HCT116 (cell line): ENCODE measurements at regions of chr18 and their contacts with region 1.

Region 1: DNA sequence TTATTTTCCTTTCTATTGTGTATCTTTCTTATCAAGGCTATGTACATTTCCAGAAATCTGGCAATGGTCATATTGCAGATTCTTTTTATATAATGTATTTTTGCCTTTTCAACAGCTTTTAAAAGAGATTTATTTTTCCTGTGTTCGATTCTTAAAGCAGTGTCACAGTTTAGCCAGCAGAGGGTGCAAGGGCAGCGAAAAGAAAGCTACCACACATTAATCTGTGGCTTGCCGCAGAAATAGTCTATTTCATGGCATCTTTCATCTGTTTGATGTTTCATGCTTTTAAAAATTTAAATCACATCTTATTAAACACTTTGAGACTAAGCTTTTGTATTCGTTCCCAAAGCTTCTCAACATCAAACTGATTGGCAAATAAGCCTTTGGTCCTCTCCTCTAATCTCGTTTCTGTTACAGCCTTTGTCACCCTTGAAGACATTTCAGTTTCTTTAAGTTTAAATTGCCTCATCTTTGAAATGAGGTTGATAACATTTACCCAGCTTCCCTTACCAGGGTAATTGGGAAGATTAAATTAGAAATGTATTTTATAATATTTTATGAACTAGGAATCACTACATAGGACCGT is 73.3 kb downstream of the PIK3C3 start:
- DNase-seq: no peak
- ATAC-seq: 0 out of 2 replicates have a peak, but pooled peaks have one; percentile 47
- H3K4me3 ChIP-seq: no peak overlapping the region
- H3K27ac ChIP-seq: no peak overlapping the region
- H3K4me1 ChIP-seq: no peaks in the 10 kb centered on the region
- H3K27me3 ChIP-seq: no peaks in the 10 kb centered on the region
- CTCF ChIP-seq: peak in 2 of 3 experiments; percentile 83 to 84; a peak in 4 of 6 replicates
- POLR2A ChIP-seq: no peak
- RAD21 ChIP-seq: no peak

Region 2: DNA sequence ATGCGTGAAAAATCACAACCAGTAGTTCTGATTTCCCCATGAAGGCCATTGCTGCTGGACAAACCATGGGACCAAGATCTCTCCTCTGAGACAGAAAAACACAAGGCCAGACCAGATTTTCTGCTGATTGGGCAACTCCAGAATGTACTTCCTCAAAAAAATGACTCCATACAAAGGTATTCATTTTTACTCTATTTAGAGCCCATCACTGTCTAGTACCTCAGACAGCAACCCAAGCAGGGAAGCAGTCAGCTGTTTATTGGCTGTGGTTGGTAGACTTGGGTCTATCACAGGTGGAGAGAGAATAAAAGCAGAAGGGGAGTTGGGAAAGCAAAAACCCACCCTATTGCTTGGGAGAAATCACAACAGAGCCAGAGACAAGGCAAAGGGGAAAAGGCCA is 146.6 kb after region 1 on chr18:
- CTCF ChIA-PET with region 1: no interaction called
- POLR2A ChIA-PET with region 1: no interaction called
- RAD21 ChIA-PET with region 1: no interaction called
- intact Hi-C with region 1: no loop called
- DNase-seq: no peak
- ATAC-seq: no peak
- H3K4me3 ChIP-seq: no peak overlapping the region
- H3K27ac ChIP-seq: no peak overlapping the region
- H3K4me1 ChIP-seq: no peaks in the 10 kb centered on the region
- H3K27me3 ChIP-seq: no peaks in the 10 kb centered on the region
- CTCF ChIP-seq: no peak
- POLR2A ChIP-seq: no peak
- RAD21 ChIP-seq: no peak

Region 3: GRCh38 chr18:43596105-43596712 is 1567.9 kb after region 1 on chr18:
- CTCF ChIA-PET with region 1: no interaction called
- POLR2A ChIA-PET with region 1: no interaction called
- RAD21 ChIA-PET with region 1: no interaction called
- intact Hi-C with region 1: loop called (anchors 5 kb)
- DNase-seq: no peak
- ATAC-seq: no peak
- H3K4me3 ChIP-seq: no peak overlapping the region
- H3K27ac ChIP-seq: no peak overlapping the region
- H3K4me1 ChIP-seq: no peaks in the 10 kb centered on the region
- H3K27me3 ChIP-seq: no peaks in the 10 kb centered on the region
- CTCF ChIP-seq: peak in 2 of 3 experiments; percentile 9 to 45; a peak in 3 of 6 replicates
- POLR2A ChIP-seq: no peak
- RAD21 ChIP-seq: peak; percentile 36